Activated CD4-positive, alpha-beta memory T cell treated with anti-CD3 and anti-CD28 coated beads, Interleukin-2, amount 10 ng/mL, durations not matched to agents 7 days and 5 days (primary cell): ENCODE measurements at regions of chr16 and their contacts with region 1.

Region 1: DNA sequence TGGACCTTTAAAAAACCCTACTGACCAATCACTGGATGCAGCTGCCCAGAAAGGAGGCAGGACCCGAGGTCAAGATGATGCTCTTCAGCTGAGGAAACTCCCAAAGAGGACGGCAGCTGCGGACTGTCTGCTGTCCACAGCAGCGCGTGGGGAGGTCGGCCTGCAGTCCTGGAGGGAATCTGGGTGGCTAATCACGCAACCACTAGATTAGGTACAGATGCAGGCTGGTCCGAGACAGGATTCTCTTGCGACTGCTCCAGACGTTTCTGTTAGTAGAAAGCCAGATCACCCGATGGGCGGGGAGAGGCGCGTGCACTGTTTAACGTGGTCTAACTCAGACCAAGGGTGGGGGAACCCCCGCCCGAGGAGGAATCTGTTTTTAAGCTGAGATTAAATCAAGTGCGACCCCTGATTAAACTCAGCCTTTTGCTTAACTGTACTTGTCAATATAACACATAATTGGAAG is 8.8 kb downstream of the CTRB2 start:
- DNase-seq: no peak
- H3K4me3 Mint-ChIP-seq: no peak overlapping the region
- H3K27ac Mint-ChIP-seq: no peak overlapping the region
- H3K4me1 Mint-ChIP-seq: peaks cover 7% of the 10 kb centered on the region
- H3K27me3 Mint-ChIP-seq: peaks cover 18% of the 10 kb centered on the region

Region 2: GRCh38 chr16:75234856-75235696 is 36.9 kb after region 1 on chr16:
- CTCF ChIA-PET with region 1: interaction called, 25 read pairs
- POLR2A ChIA-PET with region 1: no interaction called
- DNase-seq: no peak
- H3K4me3 Mint-ChIP-seq: no peak overlapping the region
- H3K27ac Mint-ChIP-seq: no peak overlapping the region
- H3K4me1 Mint-ChIP-seq: no peaks in the 10 kb centered on the region
- H3K27me3 Mint-ChIP-seq: no peaks in the 10 kb centered on the region

Region 3: DNA sequence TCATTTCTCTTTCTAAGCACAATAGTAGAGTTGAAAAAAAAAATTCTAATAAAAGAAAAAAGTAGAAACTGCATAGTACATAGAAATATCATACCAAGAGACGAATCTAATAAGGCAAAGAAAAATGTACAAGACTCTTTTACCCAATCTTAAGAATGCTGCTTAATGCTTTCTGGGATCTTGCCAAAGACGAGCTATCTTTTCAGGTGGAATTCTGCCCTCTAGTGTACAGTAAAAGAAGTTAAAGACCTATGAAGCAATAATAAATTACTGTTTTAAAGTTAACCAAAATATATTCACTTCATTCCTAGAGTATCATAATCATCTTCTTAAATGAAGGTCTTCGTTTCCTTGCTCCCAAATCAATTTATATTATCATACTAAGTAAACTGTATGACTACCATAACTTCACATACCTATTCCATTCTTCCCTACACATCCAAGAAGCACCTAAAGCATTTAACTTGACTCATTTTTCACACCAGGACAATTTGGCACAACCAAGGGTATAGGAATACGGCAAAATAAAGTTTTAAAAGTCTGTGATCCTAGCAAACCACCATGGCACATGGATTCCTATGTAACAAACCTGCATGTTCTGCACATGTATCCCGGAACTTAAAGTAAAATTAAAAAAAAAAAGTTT is 187.5 kb after region 1 on chr16:
- CTCF ChIA-PET with region 1: interaction called, 55 read pairs
- POLR2A ChIA-PET with region 1: no interaction called
- DNase-seq: no peak
- H3K4me3 Mint-ChIP-seq: no peak overlapping the region
- H3K27ac Mint-ChIP-seq: no peak overlapping the region
- H3K4me1 Mint-ChIP-seq: peaks cover 18% of the 10 kb centered on the region
- H3K27me3 Mint-ChIP-seq: peaks cover 14% of the 10 kb centered on the region

Region 4: GRCh38 chr16:75402821-75403475 is 204.8 kb after region 1 on chr16:
- CTCF ChIA-PET with region 1: interaction called, 34 read pairs
- POLR2A ChIA-PET with region 1: no interaction called
- DNase-seq: no peak
- H3K4me3 Mint-ChIP-seq: no peak overlapping the region
- H3K27ac Mint-ChIP-seq: no peak overlapping the region
- H3K4me1 Mint-ChIP-seq: peaks cover 2% of the 10 kb centered on the region
- H3K27me3 Mint-ChIP-seq: no peaks in the 10 kb centered on the region

Region 5: GRCh38 chr16:75764154-75764768 is 566.1 kb after region 1 on chr16:
- CTCF ChIA-PET with region 1: interaction called, 24 read pairs
- POLR2A ChIA-PET with region 1: no interaction called
- DNase-seq: peak; percentile 66
- H3K4me3 Mint-ChIP-seq: no peak overlapping the region
- H3K27ac Mint-ChIP-seq: no peak overlapping the region
- H3K4me1 Mint-ChIP-seq: peaks cover 9% of the 10 kb centered on the region
- H3K27me3 Mint-ChIP-seq: peaks cover 2% of the 10 kb centered on the region